Activated CD4-positive, alpha-beta memory T cell treated with anti-CD3 and anti-CD28 coated beads, Interleukin-2, amount 10 ng/mL, durations not matched to agents 7 days and 5 days (primary cell): ENCODE measurements at regions of chr9 and their contacts with region 1.

Region 1: GRCh38 chr9:104747558-104748358 is at the start of gene NIPSNAP3A:
- DNase-seq: peak; percentile 88
- H3K4me3 Mint-ChIP-seq: peak within 1 kb of the TSS; percentile 98
- H3K27ac Mint-ChIP-seq: peak within 1 kb of the TSS; percentile 98
- H3K4me1 Mint-ChIP-seq: peaks cover 28% of the 10 kb centered on the region
- H3K27me3 Mint-ChIP-seq: peaks cover 2% of the 10 kb centered on the region
- total RNA-seq, gene NIPSNAP3A: 14.0 to 17.1 TPM

Region 2: DNA sequence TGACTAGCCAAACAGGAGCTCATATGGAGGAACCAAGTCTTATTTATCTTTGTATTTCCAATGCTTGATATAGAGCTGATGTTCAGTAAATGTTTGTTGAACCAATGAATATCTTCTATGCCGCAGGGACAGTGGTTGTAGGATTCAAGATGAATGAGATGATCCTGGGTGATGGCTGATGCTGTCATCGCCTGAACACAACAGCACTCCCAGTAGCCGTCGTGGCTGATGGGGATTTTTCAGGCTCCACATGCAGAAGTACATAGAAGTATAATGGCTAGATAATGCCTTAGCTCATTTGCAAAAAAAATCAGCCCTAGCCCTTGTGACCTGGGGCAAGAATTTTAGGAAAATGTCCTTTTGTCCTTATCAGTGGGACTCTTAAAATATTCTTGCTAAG is 312.7 kb before region 1 on chr9:
- CTCF ChIA-PET with region 1: no interaction called
- POLR2A ChIA-PET with region 1: no interaction called
- DNase-seq: no peak
- H3K4me3 Mint-ChIP-seq: no peak overlapping the region
- H3K27ac Mint-ChIP-seq: no peak overlapping the region
- H3K4me1 Mint-ChIP-seq: no peaks in the 10 kb centered on the region
- H3K27me3 Mint-ChIP-seq: no peaks in the 10 kb centered on the region

Region 3: GRCh38 chr9:104765138-104765537 is 17.4 kb after region 1 on chr9:
- CTCF ChIA-PET with region 1: interaction called, 15 read pairs
- POLR2A ChIA-PET with region 1: interaction called, 57 read pairs
- DNase-seq: no peak
- H3K4me3 Mint-ChIP-seq: no peak overlapping the region
- H3K27ac Mint-ChIP-seq: no peak overlapping the region
- H3K4me1 Mint-ChIP-seq: peaks cover 6% of the 10 kb centered on the region
- H3K27me3 Mint-ChIP-seq: peaks cover 2% of the 10 kb centered on the region

Region 4: DNA sequence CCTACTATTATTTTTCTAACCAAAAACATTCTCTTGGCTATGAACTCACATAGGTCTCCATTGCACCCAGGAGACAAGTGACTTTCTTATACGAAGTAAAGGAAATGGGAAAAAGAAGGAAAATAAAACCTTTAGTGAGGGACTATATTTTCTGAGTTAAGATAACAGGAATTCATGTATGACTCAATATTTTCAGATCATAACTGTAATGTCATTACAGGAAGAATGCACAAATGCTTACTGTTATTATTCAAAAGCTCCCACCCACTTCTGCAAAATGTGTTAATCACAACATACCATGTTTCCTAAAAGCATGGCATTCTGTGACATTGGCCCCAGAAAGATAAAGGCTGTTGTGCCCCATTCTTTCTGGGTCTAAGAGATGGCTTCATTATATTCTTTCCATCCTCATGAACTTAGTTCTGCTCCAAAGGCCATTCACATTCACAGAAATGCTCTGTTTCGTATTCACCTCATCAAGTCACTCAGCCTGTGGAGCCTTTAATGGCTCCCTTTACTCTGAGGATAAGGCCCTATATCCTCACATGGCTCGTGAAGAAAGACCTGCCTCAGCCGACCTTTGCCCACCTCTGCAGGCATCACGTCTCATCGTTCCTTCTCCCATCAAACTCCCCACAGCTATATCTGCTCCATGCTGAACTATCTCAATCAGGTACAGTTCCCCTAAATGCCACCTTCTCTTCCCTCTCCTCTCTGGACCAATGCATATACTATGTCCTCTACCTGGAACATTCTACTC is 103.2 kb after region 1 on chr9:
- CTCF ChIA-PET with region 1: no interaction called
- POLR2A ChIA-PET with region 1: no interaction called
- DNase-seq: no peak
- H3K4me3 Mint-ChIP-seq: no peak overlapping the region
- H3K27ac Mint-ChIP-seq: no peak overlapping the region
- H3K4me1 Mint-ChIP-seq: peaks cover 8% of the 10 kb centered on the region
- H3K27me3 Mint-ChIP-seq: no peaks in the 10 kb centered on the region

Region 5: GRCh38 chr9:104863180-104863883 is 115.6 kb after region 1 on chr9:
- CTCF ChIA-PET with region 1: no interaction called
- POLR2A ChIA-PET with region 1: no interaction called
- DNase-seq: peak; percentile 43
- H3K4me3 Mint-ChIP-seq: no peak overlapping the region
- H3K27ac Mint-ChIP-seq: no peak overlapping the region
- H3K4me1 Mint-ChIP-seq: no peaks in the 10 kb centered on the region
- H3K27me3 Mint-ChIP-seq: no peaks in the 10 kb centered on the region